HepG2 (cell line): ENCODE measurements at regions of chr3 and their contacts with region 1.

Region 1: GRCh38 chr3:33636125-33636850 is 81.8 kb downstream of the CLASP2 start:
- DNase-seq: peak; percentile 56
- ATAC-seq: peak; percentile 38; the same call in 1 of the 3 replicates
- H3K4me3 ChIP-seq: no peak overlapping the region
- H3K27ac ChIP-seq: no peak overlapping the region
- H3K4me1 ChIP-seq: peaks cover 19% of the 10 kb centered on the region
- H3K27me3 ChIP-seq: no peaks in the 10 kb centered on the region
- CTCF ChIP-seq: peak; percentile 62
- EP300 ChIP-seq: no peak
- POLR2A ChIP-seq: no peak
- RAD21 ChIP-seq: peak; percentile 58

Region 2: GRCh38 chr3:33717866-33718594 is 81.7 kb after region 1 on chr3 and contains the start of gene CLASP2:
- CTCF ChIA-PET with region 1: interaction called, 4 read pairs
- POLR2A ChIA-PET with region 1: no interaction called
- in situ Hi-C with region 1: loop called (anchors 5 kb)
- intact Hi-C with region 1: loop called (anchors 1 kb)
- DNase-seq: peak; percentile 76
- ATAC-seq: peak; percentile 95
- H3K4me3 ChIP-seq: peak within 1 kb of the TSS; percentile 87 to 92 (median 89)
- H3K27ac ChIP-seq: peak within 1 kb of the TSS; percentile 94
- H3K4me1 ChIP-seq: peaks cover 30% of the 10 kb centered on the region
- H3K27me3 ChIP-seq: no peaks in the 10 kb centered on the region; a peak in 1 of 5 replicates
- CTCF ChIP-seq: no peak
- EP300 ChIP-seq: no peak
- POLR2A ChIP-seq: peak; percentile 40 to 69; a peak in 2 of 4 replicates
- RAD21 ChIP-seq: no peak
- total RNA-seq, gene CLASP2: 30.6 and 34.8 TPM in 2 replicates

Region 3: GRCh38 chr3:33773637-33774036 is 137.3 kb after region 1 on chr3:
- CTCF ChIA-PET with region 1: interaction called, 6 read pairs
- POLR2A ChIA-PET with region 1: no interaction called
- in situ Hi-C with region 1: no loop called
- intact Hi-C with region 1: loop called (anchors 1 kb)
- DNase-seq: no peak
- ATAC-seq: no peak
- H3K4me3 ChIP-seq: no peak overlapping the region
- H3K27ac ChIP-seq: no peak overlapping the region
- H3K4me1 ChIP-seq: no peaks in the 10 kb centered on the region
- H3K27me3 ChIP-seq: no peaks in the 10 kb centered on the region
- CTCF ChIP-seq: no peak
- EP300 ChIP-seq: no peak
- POLR2A ChIP-seq: no peak
- RAD21 ChIP-seq: no peak